PC-3 (cell line): ENCODE measurements at regions of chr3 and their contacts with region 1.

Region 1: DNA sequence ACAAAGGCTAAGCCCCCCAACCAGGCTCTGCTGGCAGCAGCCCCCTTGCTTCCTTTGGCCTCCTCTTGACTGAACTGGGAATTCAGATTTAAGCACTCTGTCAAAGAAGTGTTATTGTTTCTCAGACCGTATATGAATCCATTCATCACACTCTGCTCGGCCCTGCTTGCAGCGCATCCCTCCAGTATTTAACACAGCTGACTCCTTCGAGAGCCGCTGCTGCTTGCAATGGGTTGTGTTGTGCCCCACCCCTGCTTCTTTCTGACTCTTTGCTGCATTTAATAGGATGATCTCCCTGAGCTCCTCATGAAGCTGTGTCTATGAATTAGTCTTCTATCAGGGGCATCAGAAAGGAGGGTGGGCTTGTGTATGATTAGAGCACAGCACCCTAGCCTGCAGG is 31.2 kb downstream of the C3orf20 start:
- DNase-seq: no peak
- ATAC-seq: no peak
- H3K4me3 ChIP-seq: no peak overlapping the region
- H3K27ac ChIP-seq: no peak overlapping the region
- H3K4me1 ChIP-seq: no peaks in the 10 kb centered on the region
- H3K27me3 ChIP-seq: no peaks in the 10 kb centered on the region
- CTCF ChIP-seq: no peak

Region 2: DNA sequence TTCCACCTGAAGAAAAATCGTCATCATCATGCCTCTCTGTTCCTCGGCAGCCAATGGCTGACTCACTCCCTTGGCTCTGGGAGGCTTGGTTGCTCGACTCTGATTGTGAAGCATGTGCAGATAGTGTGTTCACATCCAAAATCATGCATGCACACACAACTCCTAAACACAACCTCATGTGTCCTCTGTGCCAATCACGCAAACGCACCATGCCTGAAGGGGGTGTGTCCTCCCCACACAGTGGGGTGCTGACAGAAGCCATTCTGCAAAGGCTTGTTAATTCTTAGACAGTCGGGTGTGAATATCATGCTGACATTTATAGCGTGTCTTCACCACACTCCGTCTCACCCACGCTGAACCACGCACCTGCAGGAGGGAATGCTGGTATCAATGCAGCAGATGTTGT is 65.9 kb before region 1 on chr3:
- CTCF ChIA-PET with region 1: interaction called, 10 read pairs
- POLR2A ChIA-PET with region 1: no interaction called
- intact Hi-C with region 1: no loop called
- DNase-seq: peak; percentile 47
- ATAC-seq: peak; percentile 42
- H3K4me3 ChIP-seq: no peak overlapping the region
- H3K27ac ChIP-seq: peak overlapping the region; percentile 75
- H3K4me1 ChIP-seq: peaks cover 29% of the 10 kb centered on the region
- H3K27me3 ChIP-seq: no peaks in the 10 kb centered on the region
- CTCF ChIP-seq: no peak

Region 3: DNA sequence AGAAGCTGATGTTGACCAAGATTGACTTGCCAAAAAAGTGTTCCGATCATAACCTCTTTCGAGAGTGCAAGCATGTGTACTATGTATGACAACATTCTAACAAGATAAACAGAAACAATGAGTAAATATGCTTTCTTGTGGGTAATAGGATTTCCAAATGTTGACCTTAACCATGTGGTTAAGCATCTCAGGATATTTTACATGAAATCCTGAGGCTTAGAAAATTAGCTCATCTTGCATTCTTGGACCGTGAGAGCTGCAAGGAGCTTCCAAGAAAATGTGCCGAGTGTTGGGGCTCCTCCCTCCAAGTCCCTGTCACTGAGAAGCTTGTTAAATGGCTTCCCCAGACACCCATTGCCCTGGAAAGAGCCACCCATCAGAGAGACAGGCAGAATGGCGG is 18.9 kb after region 1 on chr3:
- CTCF ChIA-PET with region 1: no interaction called
- POLR2A ChIA-PET with region 1: no interaction called
- intact Hi-C with region 1: no loop called
- DNase-seq: peak; percentile 69
- ATAC-seq: peak; percentile 77
- H3K4me3 ChIP-seq: no peak overlapping the region
- H3K27ac ChIP-seq: peak overlapping the region; percentile 14; the same call in 1 of the 2 replicates
- H3K4me1 ChIP-seq: peaks cover 10% of the 10 kb centered on the region
- H3K27me3 ChIP-seq: no peaks in the 10 kb centered on the region
- CTCF ChIP-seq: no peak

Region 4: DNA sequence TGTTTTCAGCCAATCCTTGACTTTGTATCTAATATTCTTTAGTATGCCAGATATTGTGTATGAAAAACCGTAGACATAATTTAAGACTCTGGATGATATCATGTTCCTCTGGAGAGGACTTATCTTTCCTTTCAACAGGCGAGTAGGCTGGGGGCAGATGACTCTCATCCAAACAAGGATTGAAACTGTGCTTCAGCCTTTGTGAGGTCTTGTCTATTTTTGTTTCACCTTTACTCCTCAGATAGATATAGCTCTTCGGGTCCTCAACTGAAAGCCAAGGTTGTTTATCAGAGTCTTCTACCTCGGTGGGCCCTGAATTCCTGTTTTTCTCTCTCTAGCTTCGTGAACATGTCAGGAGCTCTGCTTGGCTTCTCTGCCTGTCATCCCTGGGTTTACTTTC is 34.9 kb after region 1 on chr3:
- CTCF ChIA-PET with region 1: no interaction called
- POLR2A ChIA-PET with region 1: no interaction called
- intact Hi-C with region 1: no loop called
- DNase-seq: no peak
- ATAC-seq: no peak
- H3K4me3 ChIP-seq: no peak overlapping the region
- H3K27ac ChIP-seq: no peak overlapping the region
- H3K4me1 ChIP-seq: no peaks in the 10 kb centered on the region
- H3K27me3 ChIP-seq: peaks cover 15% of the 10 kb centered on the region; the same call in 1 of the 2 replicates
- CTCF ChIP-seq: no peak

Region 5: DNA sequence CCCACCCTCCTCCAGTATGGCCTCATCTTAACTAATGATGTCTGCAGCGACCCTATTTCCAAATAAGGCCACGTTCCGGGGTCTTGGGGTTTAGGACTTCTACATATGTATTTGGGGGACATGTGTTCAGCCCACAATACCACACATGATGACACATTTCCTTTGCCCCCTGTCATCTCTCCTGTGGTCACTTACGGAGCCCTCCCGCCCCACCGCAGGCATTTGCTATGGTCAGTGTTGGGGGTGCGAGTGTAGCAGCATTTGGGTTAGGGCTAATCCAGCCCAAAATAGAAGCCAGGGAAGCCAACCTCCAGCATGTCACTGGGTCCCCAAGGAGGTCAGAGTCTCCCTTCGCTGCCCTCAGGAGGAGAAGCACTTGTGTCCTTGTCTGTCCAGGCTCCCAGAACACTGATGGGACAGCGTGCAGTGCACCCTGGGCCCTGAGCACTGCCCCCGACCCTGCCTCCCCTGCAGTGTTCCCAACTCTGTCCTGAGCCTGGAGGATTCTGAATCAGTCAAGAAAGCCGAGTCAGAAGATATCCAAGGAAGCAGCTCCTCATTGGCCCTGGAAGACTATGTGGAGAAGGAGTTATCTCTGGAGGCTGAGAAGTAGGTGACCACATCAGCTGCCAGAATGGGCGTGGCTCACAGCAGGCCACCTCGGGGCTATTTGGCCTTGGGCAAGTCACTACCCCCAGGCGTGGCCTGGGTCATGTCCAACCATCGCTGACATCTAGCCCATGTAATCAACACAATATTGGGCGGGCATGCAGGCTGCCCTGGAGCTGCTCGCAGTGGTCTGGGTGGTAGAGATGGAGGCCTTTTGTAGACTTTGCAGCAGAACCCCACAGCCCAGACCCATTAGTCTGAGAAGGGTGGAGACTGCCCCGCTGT is 65.7 kb after region 1 on chr3:
- CTCF ChIA-PET with region 1: no interaction called
- POLR2A ChIA-PET with region 1: no interaction called
- intact Hi-C with region 1: no loop called
- DNase-seq: no peak
- ATAC-seq: no peak
- H3K4me3 ChIP-seq: no peak overlapping the region
- H3K27ac ChIP-seq: no peak overlapping the region
- H3K4me1 ChIP-seq: no peaks in the 10 kb centered on the region
- H3K27me3 ChIP-seq: no peaks in the 10 kb centered on the region
- CTCF ChIP-seq: no peak

Region 6: DNA sequence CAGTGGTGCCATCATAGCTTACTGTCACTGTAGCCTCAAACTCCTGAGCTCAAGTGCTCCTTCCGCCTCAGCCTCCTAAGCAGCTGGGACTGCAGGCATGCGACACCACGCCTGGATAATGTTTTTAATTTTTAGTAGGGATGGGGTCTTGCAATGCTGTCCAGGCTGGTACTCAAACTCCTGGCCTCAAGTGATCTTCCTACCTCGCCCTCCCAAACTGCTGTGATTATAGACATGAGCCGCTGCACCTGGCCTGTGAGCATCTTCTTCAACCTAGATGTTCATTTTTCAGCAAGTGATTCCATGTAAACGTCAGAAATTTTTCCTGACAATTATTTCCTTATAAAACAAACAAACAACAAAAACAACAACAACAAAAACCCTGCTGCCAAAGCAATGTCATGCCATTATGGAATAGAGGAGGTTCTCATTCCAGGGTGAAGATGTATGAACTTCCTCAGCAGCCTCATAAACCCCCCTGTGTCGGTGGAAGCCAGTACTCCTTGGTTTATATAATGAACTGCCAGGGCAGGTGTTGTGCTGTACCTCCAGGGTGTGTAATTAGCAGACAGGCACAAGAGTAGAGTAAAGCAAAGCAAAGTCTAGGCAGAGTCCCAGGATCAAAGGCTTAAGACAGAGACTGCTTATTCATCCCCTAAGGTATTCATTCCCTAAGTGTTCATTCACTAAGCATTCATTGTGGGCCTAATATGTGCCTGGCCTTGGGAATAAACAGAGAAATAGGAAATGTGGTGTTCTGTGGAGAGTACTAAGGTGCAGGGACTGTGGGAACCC is 285.9 kb after region 1 on chr3:
- CTCF ChIA-PET with region 1: no interaction called
- POLR2A ChIA-PET with region 1: no interaction called
- intact Hi-C with region 1: no loop called
- DNase-seq: no peak
- ATAC-seq: no peak
- H3K4me3 ChIP-seq: no peak overlapping the region
- H3K27ac ChIP-seq: no peak overlapping the region
- H3K4me1 ChIP-seq: peaks cover 5% of the 10 kb centered on the region; the same call in 1 of the 2 replicates
- H3K27me3 ChIP-seq: no peaks in the 10 kb centered on the region
- CTCF ChIP-seq: no peak